Heart left ventricle (tissue), 16 donors: ENCODE measurements at regions of chr12 and their contacts with region 1.

Region 1: DNA sequence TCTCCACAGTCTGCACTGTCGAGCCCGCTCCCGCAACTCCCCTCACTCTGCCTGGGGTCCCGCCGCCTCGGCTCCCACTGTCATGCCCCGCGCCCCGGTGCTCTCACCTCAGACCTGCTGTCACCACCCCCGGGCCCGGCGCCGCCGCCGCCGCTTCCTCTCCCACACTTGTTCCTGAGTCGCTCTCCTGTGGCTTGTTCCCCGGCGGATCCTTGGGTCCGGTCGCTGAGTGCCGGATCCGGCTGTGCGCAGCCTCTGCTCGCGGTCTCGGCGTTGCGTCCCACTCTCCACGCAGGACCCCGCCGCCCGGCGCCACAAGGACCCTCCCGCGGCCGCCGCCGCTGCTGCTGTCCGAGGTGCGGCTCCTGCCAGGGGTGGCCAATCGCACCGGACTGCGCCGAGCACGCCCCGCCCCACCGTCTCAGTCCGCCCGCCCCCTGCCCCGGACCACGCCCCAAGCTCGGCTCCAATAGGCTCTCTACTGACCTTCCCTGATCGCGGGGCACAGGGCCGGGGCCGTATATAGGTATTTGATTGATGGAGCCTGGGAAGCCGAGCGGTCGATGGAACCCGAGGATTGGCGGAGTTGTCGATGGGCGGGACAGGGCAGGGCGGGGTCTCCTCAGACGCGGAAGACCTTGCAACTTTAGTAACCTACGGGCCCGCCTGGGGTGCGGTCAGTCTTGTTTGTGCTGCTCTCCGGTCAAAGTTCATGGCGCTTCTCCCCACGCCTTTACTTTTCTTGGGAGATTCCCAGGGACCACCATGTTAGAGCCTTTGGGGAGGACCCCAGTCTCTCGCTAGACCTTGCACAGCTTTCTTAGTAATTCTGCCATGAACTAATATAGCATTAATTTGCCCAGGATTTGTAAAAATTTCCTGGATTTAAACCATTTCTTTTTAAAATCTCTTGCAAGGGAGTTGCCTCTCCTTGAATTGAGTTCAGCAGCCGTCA is at the start of gene TAOK3:
- DNase-seq: peak; percentile 98 to 99 (median 99)
- ATAC-seq: peak; percentile 93 to 97 (median 96)
- H3K4me3 ChIP-seq: peak within 1 kb of the TSS; percentile 70 to 97 (median 90)
- H3K27ac ChIP-seq: peak within 1 kb of the TSS; percentile 45 to 98 (median 94)
- H3K4me1 ChIP-seq: peaks cover 0 to 60% (median 33%) of the 10 kb centered on the region in 12 donors
- H3K27me3 ChIP-seq: no peaks in the 10 kb centered on the region
- CTCF ChIP-seq: peak in 1 of 12 donors; percentile 18
- POLR2A ChIP-seq: peak; percentile 74 to 97
- total RNA-seq, gene TAOK3: 11.8 to 26.6 (median 22.2) TPM

Region 2: DNA sequence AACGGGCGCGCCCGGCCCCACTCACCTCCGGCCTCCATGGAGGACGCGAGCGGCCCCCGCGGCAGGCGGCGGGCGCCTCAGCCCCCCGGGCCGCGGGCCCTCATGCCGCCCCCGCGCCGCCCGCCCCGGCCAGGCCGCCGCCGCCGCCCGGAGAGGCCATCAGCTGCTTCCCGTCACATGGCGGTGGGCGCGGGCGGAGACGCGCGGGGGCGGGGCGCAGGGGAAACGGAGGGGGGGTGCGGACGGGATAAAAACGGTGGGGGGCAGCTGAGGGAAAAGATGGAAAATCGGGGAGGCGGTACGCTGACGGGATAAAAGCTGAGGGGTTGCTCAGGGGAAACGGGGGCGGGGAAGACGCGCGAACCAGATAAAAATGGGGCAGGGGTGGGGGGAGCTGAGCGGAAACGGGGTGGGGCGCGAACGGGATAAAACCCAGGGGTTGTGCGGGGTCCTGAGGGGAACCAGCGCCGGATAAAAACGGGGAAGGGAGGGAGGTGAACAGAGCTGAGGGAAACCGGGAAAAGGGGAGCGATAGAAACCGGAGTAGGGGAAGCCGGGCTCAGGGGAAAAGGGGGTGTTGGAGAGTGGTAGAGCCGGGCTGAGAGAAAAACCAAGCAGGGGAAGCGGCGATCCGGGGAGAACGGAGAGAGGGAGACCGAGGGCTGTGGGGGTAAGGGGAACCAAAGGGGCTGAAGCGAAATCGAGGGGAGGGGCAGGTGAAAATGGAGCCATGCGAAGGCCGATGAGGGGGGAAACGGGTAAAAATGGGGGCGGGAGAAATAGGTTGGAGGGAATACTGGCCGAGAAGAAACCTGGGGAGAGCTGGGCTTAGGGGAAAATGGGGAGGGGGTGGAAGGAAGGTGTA is 311.6 kb before region 1 on chr12 and contains the start of gene WSB2:
- intact Hi-C with region 1: loop called in 4 of 10 experiments (anchors 2 to 5 kb)
- DNase-seq: peak; percentile 83 to 91 (median 89)
- ATAC-seq: peak; percentile 50 to 81 (median 75)
- H3K4me3 ChIP-seq: peak within 1 kb of the TSS; percentile 57 to 99 (median 79)
- H3K27ac ChIP-seq: peak within 1 kb of the TSS; percentile 93 to 100 (median 98)
- H3K4me1 ChIP-seq: peaks cover 0 to 61% (median 31%) of the 10 kb centered on the region in 12 donors
- H3K27me3 ChIP-seq: no peaks in the 10 kb centered on the region
- CTCF ChIP-seq: no peak
- POLR2A ChIP-seq: no peak
- total RNA-seq, gene WSB2: 89.1 to 162 (median 105) TPM

Region 3: DNA sequence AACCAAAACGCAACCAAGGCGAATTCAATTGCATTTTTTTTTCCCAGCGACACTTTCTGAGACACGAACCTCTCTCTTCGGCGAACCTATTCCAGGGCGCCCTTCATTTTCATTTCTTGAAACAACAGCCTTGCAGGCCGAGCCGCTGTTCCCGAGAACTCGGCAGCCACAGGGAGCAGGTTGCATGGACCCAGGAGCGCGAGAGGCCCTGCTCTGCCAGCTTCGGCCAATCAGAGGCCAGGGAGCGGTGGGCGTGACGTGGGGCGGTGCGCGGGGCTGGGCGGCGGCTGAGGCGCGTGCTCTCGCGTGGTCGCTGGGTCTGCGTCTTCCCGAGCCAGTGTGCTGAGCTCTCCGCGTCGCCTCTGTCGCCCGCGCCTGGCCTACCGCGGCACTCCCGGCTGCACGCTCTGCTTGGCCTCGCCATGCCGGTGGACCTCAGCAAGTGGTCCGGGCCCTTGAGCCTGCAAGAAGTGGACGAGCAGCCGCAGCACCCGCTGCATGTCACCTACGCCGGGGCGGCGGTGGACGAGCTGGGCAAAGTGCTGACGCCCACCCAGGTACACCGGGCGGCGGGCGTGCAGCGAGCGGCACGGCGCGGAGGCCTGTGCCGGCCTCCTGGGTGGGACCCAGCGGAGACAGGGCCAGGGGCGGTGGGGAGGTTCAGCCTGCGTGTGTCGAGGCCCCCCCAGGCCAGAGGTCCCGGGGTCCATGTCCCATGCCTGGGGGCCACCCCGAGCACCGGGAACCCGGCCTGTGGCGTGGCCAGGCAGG is 236.8 kb before region 1 on chr12 and contains the start of gene PEBP1:
- intact Hi-C with region 1: loop called in 1 of 10 experiments (anchors 5 kb)
- DNase-seq: peak; percentile 94 to 98 (median 96)
- ATAC-seq: peak; percentile 95 to 99 (median 99)
- H3K4me3 ChIP-seq: peak within 1 kb of the TSS; percentile 69 to 98 (median 87)
- H3K27ac ChIP-seq: peak within 1 kb of the TSS; percentile 63 to 92 (median 86)
- H3K4me1 ChIP-seq: peaks cover 0 to 36% (median 16%) of the 10 kb centered on the region in 12 donors
- H3K27me3 ChIP-seq: no peaks in the 10 kb centered on the region
- CTCF ChIP-seq: peak in 1 of 12 donors; percentile 25
- POLR2A ChIP-seq: peak in 1 of 2 donors; percentile 87
- total RNA-seq, gene PEBP1: 301 to 751 (median 420) TPM

Region 4: GRCh38 chr12:118183705-118184104 is 189.1 kb before region 1 on chr12:
- intact Hi-C with region 1: loop called (anchors 2 to 5 kb)
- DNase-seq: no peak
- ATAC-seq: no peak
- H3K4me3 ChIP-seq: no peak overlapping the region
- H3K27ac ChIP-seq: peak overlapping the region in 5 of 12 donors; percentile 6 to 25 (median 22)
- H3K4me1 ChIP-seq: peaks cover 0 to 40% (median 28%) of the 10 kb centered on the region in 12 donors
- H3K27me3 ChIP-seq: no peaks in the 10 kb centered on the region
- CTCF ChIP-seq: no peak
- POLR2A ChIP-seq: no peak

Region 5: GRCh38 chr12:119624966-119625365 is 1252.1 kb after region 1 on chr12:
- intact Hi-C with region 1: no loop called
- DNase-seq: no peak
- ATAC-seq: no peak
- H3K4me3 ChIP-seq: no peak overlapping the region
- H3K27ac ChIP-seq: no peak overlapping the region
- H3K4me1 ChIP-seq: no peaks in the 10 kb centered on the region
- H3K27me3 ChIP-seq: peaks cover 0 to 3% (median 0%) of the 10 kb centered on the region in 9 donors
- CTCF ChIP-seq: no peak
- POLR2A ChIP-seq: no peak